H1 (cell line): ENCODE measurements at regions of chr7 and their contacts with region 1.

Region 1: DNA sequence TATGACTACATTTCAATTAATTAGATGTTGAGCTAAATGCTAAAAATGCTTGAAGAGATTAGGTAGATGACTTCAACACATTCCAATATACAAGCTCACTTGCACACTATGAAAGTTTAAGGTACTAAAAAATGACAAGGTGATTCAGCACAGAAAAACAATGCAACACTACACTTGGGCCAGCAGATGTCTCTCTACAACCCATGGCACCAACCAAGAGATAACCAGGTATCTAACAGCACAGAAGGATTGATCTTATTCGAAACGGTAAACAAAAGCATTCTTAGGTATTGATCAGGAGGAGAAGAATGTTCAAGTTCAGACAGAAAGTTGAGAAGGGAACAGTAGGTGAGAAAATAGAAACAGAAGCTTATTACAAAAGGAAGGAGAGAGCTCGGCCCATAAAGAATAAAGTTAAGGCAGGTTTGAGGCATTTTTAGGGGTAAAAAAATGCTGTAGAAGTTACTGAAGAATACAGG is 248.2 kb upstream of the KLF14 start:
- DNase-seq: no peak
- H3K4me3 ChIP-seq: no peak overlapping the region
- H3K27ac ChIP-seq: no peak overlapping the region
- H3K4me1 ChIP-seq: no peaks in the 10 kb centered on the region; a peak in 1 of 7 replicates
- H3K27me3 ChIP-seq: no peaks in the 10 kb centered on the region
- CTCF ChIP-seq: peak in 2 of 3 experiments; percentile 69 to 83; a peak in 3 of 4 replicates
- EP300 ChIP-seq: no peak
- POLR2A ChIP-seq: no peak
- RAD21 ChIP-seq: peak; percentile 78 to 79

Region 2: GRCh38 chr7:130904031-130904757 is 78.0 kb before region 1 on chr7:
- CTCF ChIA-PET with region 1: interaction called, 19 read pairs
- POLR2A ChIA-PET with region 1: no interaction called
- DNase-seq: no peak
- H3K4me3 ChIP-seq: no peak overlapping the region
- H3K27ac ChIP-seq: no peak overlapping the region
- H3K4me1 ChIP-seq: peaks cover 0 to 20% (median 5%) of the 10 kb centered on the region in 4 experiments; a peak in 6 of 7 replicates
- H3K27me3 ChIP-seq: no peaks in the 10 kb centered on the region
- CTCF ChIP-seq: no peak
- EP300 ChIP-seq: no peak
- POLR2A ChIP-seq: no peak
- RAD21 ChIP-seq: no peak

Region 3: GRCh38 chr7:130943336-130943901 is 38.8 kb before region 1 on chr7:
- CTCF ChIA-PET with region 1: interaction called, 11 read pairs
- POLR2A ChIA-PET with region 1: no interaction called
- DNase-seq: no peak
- H3K4me3 ChIP-seq: no peak overlapping the region
- H3K27ac ChIP-seq: no peak overlapping the region
- H3K4me1 ChIP-seq: peaks cover 4 to 10% (median 6%) of the 10 kb centered on the region in 4 experiments
- H3K27me3 ChIP-seq: no peaks in the 10 kb centered on the region
- CTCF ChIP-seq: no peak
- EP300 ChIP-seq: no peak
- POLR2A ChIP-seq: no peak
- RAD21 ChIP-seq: no peak

Region 4: GRCh38 chr7:130961128-130961601 is 21.0 kb before region 1 on chr7:
- CTCF ChIA-PET with region 1: interaction called, 12 read pairs
- POLR2A ChIA-PET with region 1: interaction called, 3 read pairs
- DNase-seq: no peak
- H3K4me3 ChIP-seq: no peak overlapping the region
- H3K27ac ChIP-seq: no peak overlapping the region
- H3K4me1 ChIP-seq: peaks cover 0 to 4% (median 0%) of the 10 kb centered on the region in 4 experiments; a peak in 1 of 7 replicates
- H3K27me3 ChIP-seq: no peaks in the 10 kb centered on the region
- CTCF ChIP-seq: no peak
- EP300 ChIP-seq: no peak
- POLR2A ChIP-seq: no peak
- RAD21 ChIP-seq: no peak

Region 5: GRCh38 chr7:130996841-130997231 is 14.6 kb after region 1 on chr7:
- CTCF ChIA-PET with region 1: interaction called, 55 read pairs
- POLR2A ChIA-PET with region 1: no interaction called
- DNase-seq: no peak
- H3K4me3 ChIP-seq: no peak overlapping the region
- H3K27ac ChIP-seq: no peak overlapping the region
- H3K4me1 ChIP-seq: peaks cover 0 to 10% (median under 1%) of the 10 kb centered on the region in 4 experiments; a peak in 1 of 7 replicates
- H3K27me3 ChIP-seq: no peaks in the 10 kb centered on the region
- CTCF ChIP-seq: no peak
- EP300 ChIP-seq: no peak
- POLR2A ChIP-seq: no peak
- RAD21 ChIP-seq: no peak

Region 6: GRCh38 chr7:131020759-131021261 is 38.6 kb after region 1 on chr7:
- CTCF ChIA-PET with region 1: interaction called, 11 read pairs
- POLR2A ChIA-PET with region 1: no interaction called
- DNase-seq: no peak
- H3K4me3 ChIP-seq: no peak overlapping the region
- H3K27ac ChIP-seq: no peak overlapping the region
- H3K4me1 ChIP-seq: no peaks in the 10 kb centered on the region; a peak in 1 of 7 replicates
- H3K27me3 ChIP-seq: no peaks in the 10 kb centered on the region
- CTCF ChIP-seq: no peak
- EP300 ChIP-seq: no peak
- POLR2A ChIP-seq: no peak
- RAD21 ChIP-seq: no peak

Region 7: DNA sequence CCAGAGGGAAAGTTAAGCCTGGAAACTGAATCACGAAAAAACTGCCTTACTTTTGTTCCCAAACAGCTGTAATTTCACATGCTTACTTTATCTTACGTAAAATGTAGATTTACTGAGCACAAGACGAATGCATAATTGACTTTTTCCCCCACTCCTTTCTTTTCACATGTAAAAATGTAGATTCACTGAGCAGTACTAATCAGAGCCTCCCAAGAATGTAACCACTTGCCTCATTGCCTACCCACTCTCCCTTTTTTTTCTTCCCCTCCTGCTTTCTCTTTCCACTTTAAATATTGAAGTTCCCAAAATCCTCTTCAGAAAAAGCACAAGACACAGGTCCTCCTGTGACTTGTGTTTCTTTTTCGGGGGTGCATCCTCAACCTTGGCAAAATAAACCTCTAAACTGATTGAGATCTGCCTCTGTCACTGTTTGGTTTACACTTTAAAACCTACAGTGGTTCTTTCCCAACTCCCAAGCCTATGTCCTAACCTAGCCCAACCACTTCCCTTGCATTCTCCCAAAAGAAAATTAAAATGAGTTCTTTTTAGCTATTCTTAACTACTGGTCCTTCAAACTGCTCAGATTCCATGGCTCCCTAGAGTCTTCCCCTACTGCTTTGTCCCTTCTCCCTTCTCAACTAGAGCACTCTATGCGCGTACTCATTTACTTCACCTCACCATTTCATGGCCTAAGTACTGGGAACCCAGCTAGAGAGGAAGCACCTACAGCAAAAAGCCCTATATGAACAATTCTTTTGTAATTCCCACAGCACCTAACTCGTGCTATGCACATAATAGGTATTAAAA is 108.9 kb after region 1 on chr7:
- CTCF ChIA-PET with region 1: no interaction called
- POLR2A ChIA-PET with region 1: no interaction called
- DNase-seq: no peak
- H3K4me3 ChIP-seq: peak overlapping the region in 2 of 4 experiments; percentile 1 to 49; a peak in 4 of 8 replicates
- H3K27ac ChIP-seq: peak overlapping the region; percentile 72
- H3K4me1 ChIP-seq: peaks cover 5 to 36% (median 18%) of the 10 kb centered on the region in 4 experiments
- H3K27me3 ChIP-seq: no peaks in the 10 kb centered on the region
- CTCF ChIP-seq: no peak
- EP300 ChIP-seq: no peak
- POLR2A ChIP-seq: no peak; a peak in 1 of 3 replicates
- RAD21 ChIP-seq: no peak